HepG2 (cell line): ENCODE measurements at regions of chr7 and their contacts with region 1.

Region 1: DNA sequence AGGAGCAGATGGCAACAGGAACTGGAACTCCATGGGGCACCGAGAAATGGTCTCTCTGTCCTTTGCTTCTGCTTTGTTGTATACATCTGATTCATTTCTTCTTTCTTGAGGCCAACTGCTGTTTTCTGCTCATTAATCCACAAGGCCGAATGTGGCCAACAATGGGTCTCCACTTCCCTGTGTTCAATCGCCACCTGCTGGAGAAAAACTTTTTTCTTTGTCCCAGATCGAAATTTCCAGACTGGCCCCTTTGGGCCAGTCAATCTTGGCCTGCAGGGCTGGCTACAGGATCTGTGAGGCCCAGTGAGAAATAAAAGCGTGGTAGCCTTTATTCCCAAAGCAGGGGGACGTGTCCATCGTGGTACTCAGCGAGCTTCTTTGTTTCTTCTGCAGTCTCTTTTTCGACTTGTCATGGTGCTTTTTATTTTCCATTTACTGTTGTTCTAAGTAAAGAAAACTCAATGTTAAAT is 58.8 kb downstream of the PARP12 start:
- DNase-seq: peak; percentile 43
- ATAC-seq: peak; percentile 48
- H3K4me3 ChIP-seq: no peak overlapping the region
- H3K27ac ChIP-seq: no peak overlapping the region
- H3K4me1 ChIP-seq: peaks cover 31% of the 10 kb centered on the region
- H3K27me3 ChIP-seq: peaks cover 2 to 4% of the 10 kb centered on the region in 2 experiments; a peak in 3 of 5 replicates
- CTCF ChIP-seq: peak; percentile 66
- EP300 ChIP-seq: no peak
- POLR2A ChIP-seq: no peak
- RAD21 ChIP-seq: 0 out of 2 replicates have a peak, but pooled peaks have one; percentile 28

Region 2: DNA sequence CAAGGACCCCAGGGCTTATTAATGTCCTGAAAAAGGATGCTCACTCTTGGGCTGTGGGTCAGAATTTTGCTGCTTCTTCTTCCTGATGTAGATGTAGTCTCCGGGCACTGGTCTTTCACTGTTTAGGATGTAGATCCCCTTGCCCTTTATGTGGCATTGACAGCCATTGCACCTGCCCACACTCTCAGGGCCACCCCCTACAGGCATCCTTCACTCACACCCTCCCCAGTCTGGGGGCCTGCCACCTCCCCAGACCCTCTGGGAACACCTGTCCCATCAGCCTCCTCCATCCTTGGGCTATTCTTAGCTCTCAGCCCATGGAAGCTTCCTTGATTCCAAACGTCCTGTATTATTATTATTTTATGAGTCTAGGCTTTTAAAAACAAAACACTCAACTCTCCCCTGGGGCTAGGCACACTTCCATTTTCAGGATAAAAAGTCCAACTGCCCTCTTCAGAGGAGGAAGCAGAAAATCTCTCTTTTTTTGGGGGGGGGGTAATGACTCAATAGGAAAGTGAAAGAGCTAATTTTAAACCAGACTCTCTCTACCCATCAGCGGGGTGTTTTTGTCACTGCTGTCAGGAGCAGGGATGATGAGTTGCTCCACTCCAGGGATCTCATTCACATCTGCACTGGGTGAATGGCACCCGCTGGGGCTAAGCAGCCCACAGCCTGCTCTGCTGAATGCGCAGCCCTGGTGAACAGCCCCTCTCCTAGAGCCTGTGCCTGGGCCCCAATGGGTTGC is 508.9 kb before region 1 on chr7:
- CTCF ChIA-PET with region 1: interaction called, 8 read pairs
- POLR2A ChIA-PET with region 1: no interaction called
- in situ Hi-C with region 1: loop called (anchors 10 kb)
- intact Hi-C with region 1: loop called (anchors 1 kb)
- DNase-seq: no peak
- ATAC-seq: no peak
- H3K4me3 ChIP-seq: no peak overlapping the region
- H3K27ac ChIP-seq: no peak overlapping the region
- H3K4me1 ChIP-seq: no peaks in the 10 kb centered on the region
- H3K27me3 ChIP-seq: peaks cover 0 to 48% of the 10 kb centered on the region in 2 experiments
- CTCF ChIP-seq: no peak
- EP300 ChIP-seq: no peak
- POLR2A ChIP-seq: no peak
- RAD21 ChIP-seq: no peak

Region 3: GRCh38 chr7:139602143-139602722 is 401.7 kb before region 1 on chr7:
- CTCF ChIA-PET with region 1: interaction called, 19 read pairs
- POLR2A ChIA-PET with region 1: no interaction called
- in situ Hi-C with region 1: no loop called
- intact Hi-C with region 1: loop called (anchors 1 kb)
- DNase-seq: peak; percentile 37
- ATAC-seq: peak; percentile 89
- H3K4me3 ChIP-seq: no peak overlapping the region
- H3K27ac ChIP-seq: no peak overlapping the region
- H3K4me1 ChIP-seq: no peaks in the 10 kb centered on the region
- H3K27me3 ChIP-seq: no peaks in the 10 kb centered on the region
- CTCF ChIP-seq: peak; percentile 66
- EP300 ChIP-seq: no peak
- POLR2A ChIP-seq: no peak
- RAD21 ChIP-seq: 0 out of 2 replicates have a peak, but pooled peaks have one; percentile 24

Region 4: DNA sequence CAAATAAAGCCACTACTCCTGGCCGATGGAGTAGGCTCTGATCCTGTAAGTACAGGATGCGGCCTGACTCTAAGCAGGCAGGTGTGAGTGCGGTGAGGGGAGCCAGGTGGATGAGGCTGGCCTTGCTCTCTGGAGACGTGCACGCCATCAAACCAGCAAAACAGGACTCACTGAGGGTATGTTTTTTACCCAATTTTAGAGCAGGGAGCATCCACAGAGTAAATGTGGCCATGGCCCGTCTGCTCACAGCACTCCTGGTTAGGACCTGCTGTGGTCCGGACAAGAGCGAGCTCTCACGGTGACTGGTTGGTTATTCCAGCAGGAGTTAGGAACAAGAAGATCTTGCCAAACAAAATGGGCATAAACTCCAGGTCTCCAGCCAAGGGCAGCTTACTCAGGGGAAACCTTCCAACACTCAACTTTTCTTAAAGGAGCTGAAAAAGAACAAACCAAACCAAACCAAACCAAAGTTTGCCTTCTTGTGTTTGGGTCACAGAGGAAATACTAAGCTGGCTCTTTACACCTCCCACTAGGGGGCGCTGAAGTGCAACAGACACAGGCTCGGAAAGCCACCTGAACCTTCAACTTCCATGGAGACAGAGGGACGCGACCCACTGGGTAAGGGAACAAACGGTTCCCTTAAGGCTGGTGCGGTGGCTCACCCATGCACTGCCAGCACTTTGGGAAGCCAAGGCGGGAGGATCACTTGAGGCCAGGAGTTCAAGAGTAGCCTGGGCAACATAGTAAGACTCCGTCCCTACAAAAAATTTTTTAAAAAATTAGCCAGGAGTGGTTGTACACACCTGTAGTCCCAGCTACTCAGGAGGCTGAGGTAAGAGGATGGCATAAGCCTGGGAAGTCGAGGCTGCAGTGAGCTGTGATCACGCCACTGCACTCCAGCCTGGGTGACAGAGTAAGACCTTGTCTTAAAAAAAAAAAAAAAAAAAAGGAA is 358.1 kb before region 1 on chr7:
- CTCF ChIA-PET with region 1: interaction called, 44 read pairs
- POLR2A ChIA-PET with region 1: no interaction called
- in situ Hi-C with region 1: loop called (anchors 5 kb)
- intact Hi-C with region 1: loop called (anchors 1 kb)
- DNase-seq: peak; percentile 84
- ATAC-seq: peak; percentile 83
- H3K4me3 ChIP-seq: no peak overlapping the region
- H3K27ac ChIP-seq: no peak overlapping the region
- H3K4me1 ChIP-seq: peaks cover 65% of the 10 kb centered on the region
- H3K27me3 ChIP-seq: no peaks in the 10 kb centered on the region
- CTCF ChIP-seq: peak; percentile 95
- EP300 ChIP-seq: no peak
- POLR2A ChIP-seq: no peak
- RAD21 ChIP-seq: peak; percentile 90

Region 5: GRCh38 chr7:139829025-139829774 is 174.7 kb before region 1 on chr7 and contains the start of gene TBXAS1:
- CTCF ChIA-PET with region 1: no interaction called
- POLR2A ChIA-PET with region 1: no interaction called
- in situ Hi-C with region 1: no loop called
- intact Hi-C with region 1: loop called (anchors 5 kb)
- DNase-seq: no peak
- ATAC-seq: peak; percentile 91
- H3K4me3 ChIP-seq: peak within 1 kb of the TSS; percentile 27 to 49 (median 47)
- H3K27ac ChIP-seq: no peak within 1 kb of the TSS
- H3K4me1 ChIP-seq: peaks cover 31% of the 10 kb centered on the region
- H3K27me3 ChIP-seq: peaks cover 0 to 7% of the 10 kb centered on the region in 2 experiments; a peak in 3 of 5 replicates
- CTCF ChIP-seq: no peak
- EP300 ChIP-seq: no peak
- POLR2A ChIP-seq: no peak
- RAD21 ChIP-seq: no peak
- total RNA-seq, gene TBXAS1: 4.0 and 6.1 TPM in 2 replicates

Region 6: GRCh38 chr7:140326116-140326928 is 322.4 kb after region 1 on chr7:
- CTCF ChIA-PET with region 1: no interaction called
- POLR2A ChIA-PET with region 1: no interaction called
- in situ Hi-C with region 1: no loop called
- intact Hi-C with region 1: loop called (anchors 5 kb)
- DNase-seq: peak; percentile 63
- ATAC-seq: peak; percentile 93
- H3K4me3 ChIP-seq: peak overlapping the region; percentile 33 to 58 (median 49)
- H3K27ac ChIP-seq: no peak overlapping the region
- H3K4me1 ChIP-seq: peaks cover 27% of the 10 kb centered on the region
- H3K27me3 ChIP-seq: no peaks in the 10 kb centered on the region
- CTCF ChIP-seq: peak; percentile 93
- EP300 ChIP-seq: no peak
- POLR2A ChIP-seq: no peak
- RAD21 ChIP-seq: peak; percentile 91